GM12878 (cell line): ENCODE measurements at regions of chr1 and their contacts with region 1.

Region 1: DNA sequence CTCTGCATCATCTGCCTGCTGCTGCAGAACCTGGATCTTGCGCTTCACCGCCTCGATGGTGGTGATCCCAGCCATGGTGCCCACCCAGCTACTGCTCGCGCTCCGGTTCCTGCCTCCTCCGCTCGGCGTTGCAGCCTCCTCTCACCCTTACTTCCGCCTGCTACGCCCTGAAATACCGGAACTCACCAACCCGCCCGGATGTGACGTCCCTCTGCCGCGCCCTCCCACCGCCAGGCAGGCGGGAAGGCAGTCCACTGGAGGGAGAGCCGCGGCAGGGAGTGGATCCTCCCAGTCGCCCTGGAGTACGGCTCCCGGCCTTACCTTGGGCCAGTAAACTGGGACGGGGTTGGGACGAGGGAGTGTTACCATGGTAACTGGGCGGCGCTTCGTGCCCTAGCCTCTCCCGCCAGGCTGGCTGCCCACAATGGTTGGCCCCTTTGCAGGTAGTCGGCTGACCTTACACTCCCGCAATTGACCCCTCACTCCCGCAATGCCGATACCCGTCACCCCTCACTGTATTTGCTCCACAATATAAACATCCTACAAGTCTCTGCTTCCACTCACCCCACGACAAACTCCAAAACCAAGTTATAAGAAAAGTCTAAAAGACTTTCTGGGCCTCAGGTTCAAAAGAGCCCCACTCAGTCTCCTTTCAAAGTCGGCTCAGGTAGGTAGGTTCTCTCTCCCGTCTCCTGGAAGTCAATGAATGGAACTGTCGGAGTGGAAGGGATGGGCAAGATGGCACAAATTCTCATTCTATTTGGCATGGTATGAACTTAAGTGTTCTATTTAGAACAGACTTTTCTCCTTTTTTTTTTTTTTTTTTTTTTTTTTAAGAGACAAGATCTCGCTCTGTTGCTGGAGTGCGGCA is 8.6 kb downstream of the TPM3 start:
- DNase-seq: peak; percentile 73
- ATAC-seq: peak; percentile 81
- H3K4me3 ChIP-seq: peak overlapping the region; percentile 99
- H3K27ac ChIP-seq: peak overlapping the region; percentile 94
- H3K4me1 ChIP-seq: peaks cover 14% of the 10 kb centered on the region
- H3K27me3 ChIP-seq: no peaks in the 10 kb centered on the region
- CTCF ChIP-seq: no peak
- EP300 ChIP-seq: no peak
- POLR2A ChIP-seq: peak; percentile 98
- RAD21 ChIP-seq: no peak

Region 2: GRCh38 chr1:153775458-153776327 is 407.6 kb before region 1 on chr1:
- CTCF ChIA-PET with region 1: no interaction called
- POLR2A ChIA-PET with region 1: no interaction called
- RAD21 ChIA-PET with region 1: no interaction called
- SMC1A ChIA-PET with region 1: no interaction called
- in situ Hi-C with region 1: no loop called
- intact Hi-C with region 1: no loop called
- DNase-seq: no peak
- ATAC-seq: peak; percentile 84
- H3K4me3 ChIP-seq: peak overlapping the region; percentile 81
- H3K27ac ChIP-seq: peak overlapping the region; percentile 56
- H3K4me1 ChIP-seq: peaks cover 3% of the 10 kb centered on the region
- H3K27me3 ChIP-seq: no peaks in the 10 kb centered on the region
- CTCF ChIP-seq: no peak
- EP300 ChIP-seq: no peak
- POLR2A ChIP-seq: peak; percentile 87
- RAD21 ChIP-seq: no peak

Region 3: GRCh38 chr1:154157520-154158306 is 25.6 kb before region 1 on chr1:
- CTCF ChIA-PET with region 1: interaction called, 4 read pairs
- POLR2A ChIA-PET with region 1: interaction called, 20 read pairs
- RAD21 ChIA-PET with region 1: interaction called, 30 read pairs
- SMC1A ChIA-PET with region 1: interaction called, 22 read pairs
- in situ Hi-C with region 1: no loop called
- intact Hi-C with region 1: no loop called
- DNase-seq: peak; percentile 64
- ATAC-seq: peak; percentile 95
- H3K4me3 ChIP-seq: peak overlapping the region; percentile 16; the same call in 1 of the 2 replicates
- H3K27ac ChIP-seq: peak overlapping the region; percentile 75
- H3K4me1 ChIP-seq: peaks cover 20% of the 10 kb centered on the region
- H3K27me3 ChIP-seq: no peaks in the 10 kb centered on the region
- CTCF ChIP-seq: no peak
- EP300 ChIP-seq: 0 out of 4 replicates have a peak, but pooled peaks of 1 of the 2 experiments have one; percentile 17
- POLR2A ChIP-seq: no peak
- RAD21 ChIP-seq: no peak

Region 4: DNA sequence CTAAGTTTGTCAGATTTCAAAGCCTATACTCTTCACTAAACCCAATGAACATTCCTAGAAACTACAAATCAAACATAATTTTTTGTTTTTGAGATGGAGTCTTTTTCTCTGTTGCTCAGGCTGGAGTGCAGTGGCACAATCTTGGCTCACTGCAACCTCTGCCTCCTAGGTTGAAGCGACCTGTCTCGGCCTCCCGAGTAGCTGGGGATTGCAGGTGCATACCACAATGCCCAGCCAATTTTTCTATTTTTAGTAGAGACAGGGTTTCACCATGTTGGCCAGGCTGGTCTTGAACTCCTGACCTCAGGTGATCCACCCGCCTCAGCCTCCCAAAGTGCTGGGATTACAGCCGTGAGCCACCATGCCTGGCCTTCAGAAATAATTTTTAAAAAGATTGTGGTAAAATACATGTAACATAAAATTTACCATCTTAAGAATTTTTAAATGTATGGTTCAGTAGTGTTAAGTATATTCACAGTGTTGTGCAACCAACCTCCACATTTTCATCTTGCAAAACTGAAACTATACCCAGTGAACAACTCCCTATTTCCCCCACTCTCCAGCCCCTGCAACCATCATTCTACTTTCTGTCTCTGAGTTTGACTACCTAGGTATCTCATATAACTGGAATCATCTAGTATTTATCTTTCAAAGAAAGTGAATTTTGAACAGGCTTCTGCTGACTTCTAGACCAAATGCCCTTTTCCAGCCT is 25.6 kb after region 1 on chr1:
- CTCF ChIA-PET with region 1: no interaction called
- POLR2A ChIA-PET with region 1: no interaction called
- RAD21 ChIA-PET with region 1: no interaction called
- SMC1A ChIA-PET with region 1: no interaction called
- in situ Hi-C with region 1: no loop called
- intact Hi-C with region 1: no loop called
- DNase-seq: no peak
- ATAC-seq: no peak
- H3K4me3 ChIP-seq: no peak overlapping the region
- H3K27ac ChIP-seq: no peak overlapping the region
- H3K4me1 ChIP-seq: no peaks in the 10 kb centered on the region
- H3K27me3 ChIP-seq: no peaks in the 10 kb centered on the region
- CTCF ChIP-seq: no peak
- EP300 ChIP-seq: no peak
- POLR2A ChIP-seq: no peak
- RAD21 ChIP-seq: no peak

Region 5: GRCh38 chr1:154220071-154220969 is 37.0 kb after region 1 on chr1 and contains the start of gene UBAP2L:
- CTCF ChIA-PET with region 1: no interaction called
- POLR2A ChIA-PET with region 1: interaction called, 6 read pairs
- RAD21 ChIA-PET with region 1: interaction called, 3 read pairs
- SMC1A ChIA-PET with region 1: interaction called, 5 read pairs
- in situ Hi-C with region 1: no loop called
- intact Hi-C with region 1: loop called (anchors 2 kb)
- DNase-seq: peak; percentile 98
- ATAC-seq: peak; percentile 90
- H3K4me3 ChIP-seq: peak within 1 kb of the TSS; percentile 99
- H3K27ac ChIP-seq: peak within 1 kb of the TSS; percentile 99
- H3K4me1 ChIP-seq: peaks cover 21% of the 10 kb centered on the region
- H3K27me3 ChIP-seq: no peaks in the 10 kb centered on the region
- CTCF ChIP-seq: no peak
- EP300 ChIP-seq: no peak
- POLR2A ChIP-seq: peak; percentile 97
- RAD21 ChIP-seq: no peak
- polyA plus RNA-seq, gene UBAP2L: 49.9 to 53.3 TPM

Region 6: GRCh38 chr1:154459080-154459479 is 275.8 kb after region 1 on chr1:
- CTCF ChIA-PET with region 1: no interaction called
- POLR2A ChIA-PET with region 1: no interaction called
- RAD21 ChIA-PET with region 1: no interaction called
- SMC1A ChIA-PET with region 1: no interaction called
- in situ Hi-C with region 1: no loop called
- intact Hi-C with region 1: no loop called
- DNase-seq: no peak
- ATAC-seq: no peak
- H3K4me3 ChIP-seq: no peak overlapping the region
- H3K27ac ChIP-seq: no peak overlapping the region
- H3K4me1 ChIP-seq: peaks cover 13% of the 10 kb centered on the region
- H3K27me3 ChIP-seq: no peaks in the 10 kb centered on the region
- CTCF ChIP-seq: no peak
- EP300 ChIP-seq: no peak
- POLR2A ChIP-seq: no peak
- RAD21 ChIP-seq: no peak